Caco-2 (cell line): ENCODE measurements at regions of chr15 and their contacts with region 1.

Region 1: GRCh38 chr15:40217159-40217824 is 21.6 kb upstream of the PAK6 start:
- DNase-seq: peak; percentile 60 to 85
- H3K4me3 ChIP-seq: no peak overlapping the region
- H3K4me3 Mint-ChIP-seq: no peak overlapping the region
- H3K27ac Mint-ChIP-seq: no peak overlapping the region
- H3K4me1 ChIP-seq: no peaks in the 10 kb centered on the region
- H3K4me1 Mint-ChIP-seq: no peaks in the 10 kb centered on the region
- H3K27me3 ChIP-seq: no peaks in the 10 kb centered on the region
- H3K27me3 Mint-ChIP-seq: no peaks in the 10 kb centered on the region
- CTCF ChIP-seq: peak; percentile 67 to 77

Region 2: GRCh38 chr15:40054605-40055545 is 162.4 kb before region 1 on chr15:
- CTCF ChIA-PET with region 1: no interaction called
- POLR2A ChIA-PET with region 1: no interaction called
- intact Hi-C with region 1: no loop called
- DNase-seq: peak in 1 of 2 experiments; percentile 70
- H3K4me3 ChIP-seq: no peak overlapping the region
- H3K4me3 Mint-ChIP-seq: no peak overlapping the region
- H3K27ac Mint-ChIP-seq: peak overlapping the region; percentile 2
- H3K4me1 ChIP-seq: peaks cover 29% of the 10 kb centered on the region
- H3K4me1 Mint-ChIP-seq: peaks cover 26% of the 10 kb centered on the region
- H3K27me3 ChIP-seq: no peaks in the 10 kb centered on the region
- H3K27me3 Mint-ChIP-seq: no peaks in the 10 kb centered on the region
- CTCF ChIP-seq: no peak

Region 3: DNA sequence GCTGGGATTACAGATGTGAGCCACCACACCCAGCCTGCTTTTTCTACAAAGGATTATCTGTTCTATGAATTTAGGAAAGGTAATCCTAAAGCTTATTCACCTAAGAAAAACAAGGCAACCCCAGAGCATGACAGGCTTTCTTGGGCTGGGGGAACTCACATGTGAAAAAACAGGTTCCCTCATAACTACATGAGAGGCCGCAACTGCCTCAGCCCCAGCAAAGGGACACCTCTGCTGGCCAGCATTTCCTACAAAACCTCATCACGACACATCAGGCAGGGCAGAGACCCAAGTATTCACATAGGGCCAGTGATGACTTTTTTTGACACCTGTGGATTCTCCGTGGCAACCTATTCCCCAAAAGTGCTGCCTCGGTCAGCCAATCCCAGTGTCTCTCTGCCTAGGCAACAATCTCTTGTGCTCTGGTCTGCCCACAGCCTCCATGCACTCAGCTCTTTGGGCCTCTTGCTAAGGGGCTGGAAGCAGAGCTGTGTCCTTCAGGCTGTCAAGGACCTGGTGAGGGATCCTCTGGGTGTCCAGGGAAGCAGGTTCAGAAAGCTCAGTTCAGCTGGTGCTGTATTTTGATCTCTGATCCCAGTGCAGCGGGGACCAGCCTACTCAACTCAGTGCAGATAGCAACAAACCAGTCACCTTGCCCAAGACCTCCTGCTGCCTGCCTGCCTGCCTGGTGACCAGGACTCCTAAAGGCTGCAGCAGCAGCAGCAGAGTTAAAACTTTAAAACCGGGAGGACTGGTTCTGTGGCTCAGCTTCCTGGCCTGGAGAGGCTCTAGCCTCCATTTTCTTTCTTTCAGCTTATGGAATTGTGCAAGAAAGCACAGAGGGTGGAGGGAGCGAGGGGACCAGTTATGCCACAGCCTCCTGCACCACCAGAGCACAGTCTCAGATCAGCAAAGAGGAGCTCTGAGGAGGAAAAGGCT is 27.6 kb after region 1 on chr15:
- CTCF ChIA-PET with region 1: interaction called, 5 read pairs
- POLR2A ChIA-PET with region 1: interaction called, 3 read pairs
- intact Hi-C with region 1: loop called (anchors 1 kb)
- DNase-seq: peak; percentile 79 to 83
- H3K4me3 ChIP-seq: no peak overlapping the region
- H3K4me3 Mint-ChIP-seq: no peak overlapping the region
- H3K27ac Mint-ChIP-seq: peak overlapping the region; percentile 86
- H3K4me1 ChIP-seq: peaks cover 18% of the 10 kb centered on the region
- H3K4me1 Mint-ChIP-seq: peaks cover 7% of the 10 kb centered on the region
- H3K27me3 ChIP-seq: no peaks in the 10 kb centered on the region
- H3K27me3 Mint-ChIP-seq: no peaks in the 10 kb centered on the region
- CTCF ChIP-seq: no peak

Region 4: GRCh38 chr15:40266828-40267304 is 49.6 kb after region 1 on chr15:
- CTCF ChIA-PET with region 1: interaction called, 67 read pairs
- POLR2A ChIA-PET with region 1: no interaction called
- intact Hi-C with region 1: no loop called
- DNase-seq: no peak
- H3K4me3 ChIP-seq: no peak overlapping the region
- H3K4me3 Mint-ChIP-seq: no peak overlapping the region
- H3K27ac Mint-ChIP-seq: no peak overlapping the region
- H3K4me1 ChIP-seq: no peaks in the 10 kb centered on the region
- H3K4me1 Mint-ChIP-seq: no peaks in the 10 kb centered on the region
- H3K27me3 ChIP-seq: no peaks in the 10 kb centered on the region
- H3K27me3 Mint-ChIP-seq: no peaks in the 10 kb centered on the region
- CTCF ChIP-seq: no peak

Region 5: GRCh38 chr15:40296568-40297230 is 79.4 kb after region 1 on chr15:
- CTCF ChIA-PET with region 1: no interaction called
- POLR2A ChIA-PET with region 1: no interaction called
- intact Hi-C with region 1: no loop called
- DNase-seq: no peak
- H3K4me3 ChIP-seq: no peak overlapping the region
- H3K4me3 Mint-ChIP-seq: no peak overlapping the region
- H3K27ac Mint-ChIP-seq: no peak overlapping the region
- H3K4me1 ChIP-seq: peaks cover 6% of the 10 kb centered on the region
- H3K4me1 Mint-ChIP-seq: peaks cover 11% of the 10 kb centered on the region
- H3K27me3 ChIP-seq: no peaks in the 10 kb centered on the region
- H3K27me3 Mint-ChIP-seq: no peaks in the 10 kb centered on the region
- CTCF ChIP-seq: no peak